ENCODE measurements at regions of chr4 and their contacts with region 1.

Region 1: GRCh38 chr4:161850631-161851030 is 313.2 kb downstream of the FSTL5 start:
- DNase-seq: no peak
- ATAC-seq: no peak
- H3K4me3 ChIP-seq: no peak overlapping the region
- H3K27ac ChIP-seq: no peak overlapping the region
- H3K4me1 ChIP-seq: no peaks in the 10 kb centered on the region
- H3K27me3 ChIP-seq: peaks cover 0 to 4% (median 0%) of the 10 kb centered on the region in 7 donors
- CTCF ChIP-seq: no peak

Region 2: GRCh38 chr4:161869511-161869910 is 18.9 kb after region 1 on chr4:
- intact Hi-C with region 1: loop called in 1 of 10 experiments (anchors 1 kb)
- DNase-seq: no peak
- ATAC-seq: no peak
- H3K4me3 ChIP-seq: no peak overlapping the region
- H3K27ac ChIP-seq: no peak overlapping the region
- H3K4me1 ChIP-seq: no peaks in the 10 kb centered on the region
- H3K27me3 ChIP-seq: no peaks in the 10 kb centered on the region
- CTCF ChIP-seq: no peak

Measured in heart right ventricle (tissue), 16 donors.